ENCODE measurements at regions of chr6 and their contacts with region 1.

Region 1: GRCh38 chr6:57316581-57317059 is 810 bp upstream of the PRIM2 start:
- DNase-seq: peak; percentile 77
- H3K4me3 Mint-ChIP-seq: peak overlapping the region; percentile 99
- H3K27ac Mint-ChIP-seq: peak overlapping the region; percentile 94
- H3K4me1 Mint-ChIP-seq: peaks cover 36% of the 10 kb centered on the region
- H3K27me3 Mint-ChIP-seq: peaks cover 18% of the 10 kb centered on the region

Region 2: GRCh38 chr6:55980627-55981211 is 1335.9 kb before region 1 on chr6:
- intact Hi-C with region 1: no loop called
- DNase-seq: no peak
- H3K4me3 Mint-ChIP-seq: no peak overlapping the region
- H3K27ac Mint-ChIP-seq: no peak overlapping the region
- H3K4me1 Mint-ChIP-seq: no peaks in the 10 kb centered on the region
- H3K27me3 Mint-ChIP-seq: no peaks in the 10 kb centered on the region

Region 3: DNA sequence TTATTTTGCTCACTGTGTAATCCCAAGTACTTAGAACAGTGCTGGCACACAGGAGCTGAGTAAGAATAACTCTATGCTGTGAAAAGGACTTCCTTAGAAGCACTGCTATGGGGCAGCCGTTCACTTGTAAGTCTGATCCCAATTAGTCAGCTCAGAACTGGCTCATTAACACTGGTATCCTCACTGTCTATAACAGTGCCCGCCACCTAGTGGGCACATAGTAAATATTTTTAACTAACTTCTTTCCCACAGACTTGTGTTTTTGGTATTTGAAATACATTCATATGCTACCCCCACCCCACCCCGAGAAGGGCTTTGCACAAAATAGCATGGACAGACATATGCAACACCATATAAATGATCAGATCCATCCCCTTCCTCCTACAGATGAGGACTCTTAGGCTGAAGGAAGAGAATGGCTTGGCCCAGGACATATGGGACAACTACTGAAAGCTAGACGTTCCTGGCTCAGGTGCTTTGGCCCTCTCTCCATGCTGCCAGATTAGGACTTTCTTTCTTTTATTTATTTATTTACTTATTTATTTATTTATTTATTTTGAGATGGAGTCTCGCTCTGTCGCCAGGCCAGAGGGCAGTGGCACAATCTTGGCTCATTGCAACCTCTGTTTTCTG is 721.0 kb before region 1 on chr6:
- intact Hi-C with region 1: loop called (anchors 1 kb)
- DNase-seq: peak; percentile 17
- H3K4me3 Mint-ChIP-seq: no peak overlapping the region
- H3K27ac Mint-ChIP-seq: no peak overlapping the region
- H3K4me1 Mint-ChIP-seq: peaks cover 29% of the 10 kb centered on the region
- H3K27me3 Mint-ChIP-seq: peaks cover 1% of the 10 kb centered on the region

Region 4: GRCh38 chr6:56851541-56852259 is 464.9 kb before region 1 on chr6:
- intact Hi-C with region 1: loop called (anchors 2 kb)
- DNase-seq: peak; percentile 37
- H3K4me3 Mint-ChIP-seq: peak overlapping the region; percentile 81
- H3K27ac Mint-ChIP-seq: peak overlapping the region; percentile 78
- H3K4me1 Mint-ChIP-seq: peaks cover 30% of the 10 kb centered on the region
- H3K27me3 Mint-ChIP-seq: peaks cover 24% of the 10 kb centered on the region

Region 5: GRCh38 chr6:57021086-57021720 is 295.4 kb before region 1 on chr6:
- intact Hi-C with region 1: loop called (anchors 2 kb)
- DNase-seq: no peak
- H3K4me3 Mint-ChIP-seq: no peak overlapping the region
- H3K27ac Mint-ChIP-seq: no peak overlapping the region
- H3K4me1 Mint-ChIP-seq: no peaks in the 10 kb centered on the region
- H3K27me3 Mint-ChIP-seq: peaks cover 14% of the 10 kb centered on the region

Region 6: DNA sequence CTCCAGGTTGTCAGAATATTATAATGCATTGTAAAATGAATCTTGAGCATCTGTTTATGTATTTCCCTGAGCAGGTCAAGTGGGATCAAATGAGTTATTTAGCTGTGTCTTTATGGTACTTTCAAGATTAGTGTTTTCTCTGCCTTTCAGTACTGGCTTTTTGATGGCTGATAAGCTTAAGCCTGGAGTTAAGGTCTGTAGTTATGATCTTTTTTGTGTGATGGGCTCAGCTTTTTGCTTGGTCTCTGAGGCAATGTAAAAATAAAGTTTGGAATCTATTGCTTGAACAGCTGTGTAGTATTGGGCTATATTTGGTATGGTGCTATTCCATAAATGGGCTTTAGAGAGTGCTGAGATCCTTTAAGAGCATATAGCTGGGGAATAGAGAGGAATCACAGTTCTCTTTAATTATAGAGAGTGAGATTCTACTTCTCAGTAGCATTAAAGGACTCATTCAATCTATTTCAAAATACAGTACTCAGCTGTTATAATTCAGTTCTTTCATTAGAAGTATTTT is 185.9 kb before region 1 on chr6:
- intact Hi-C with region 1: no loop called
- DNase-seq: no peak
- H3K4me3 Mint-ChIP-seq: no peak overlapping the region
- H3K27ac Mint-ChIP-seq: no peak overlapping the region
- H3K4me1 Mint-ChIP-seq: peaks cover 11% of the 10 kb centered on the region
- H3K27me3 Mint-ChIP-seq: no peaks in the 10 kb centered on the region

Region 7: DNA sequence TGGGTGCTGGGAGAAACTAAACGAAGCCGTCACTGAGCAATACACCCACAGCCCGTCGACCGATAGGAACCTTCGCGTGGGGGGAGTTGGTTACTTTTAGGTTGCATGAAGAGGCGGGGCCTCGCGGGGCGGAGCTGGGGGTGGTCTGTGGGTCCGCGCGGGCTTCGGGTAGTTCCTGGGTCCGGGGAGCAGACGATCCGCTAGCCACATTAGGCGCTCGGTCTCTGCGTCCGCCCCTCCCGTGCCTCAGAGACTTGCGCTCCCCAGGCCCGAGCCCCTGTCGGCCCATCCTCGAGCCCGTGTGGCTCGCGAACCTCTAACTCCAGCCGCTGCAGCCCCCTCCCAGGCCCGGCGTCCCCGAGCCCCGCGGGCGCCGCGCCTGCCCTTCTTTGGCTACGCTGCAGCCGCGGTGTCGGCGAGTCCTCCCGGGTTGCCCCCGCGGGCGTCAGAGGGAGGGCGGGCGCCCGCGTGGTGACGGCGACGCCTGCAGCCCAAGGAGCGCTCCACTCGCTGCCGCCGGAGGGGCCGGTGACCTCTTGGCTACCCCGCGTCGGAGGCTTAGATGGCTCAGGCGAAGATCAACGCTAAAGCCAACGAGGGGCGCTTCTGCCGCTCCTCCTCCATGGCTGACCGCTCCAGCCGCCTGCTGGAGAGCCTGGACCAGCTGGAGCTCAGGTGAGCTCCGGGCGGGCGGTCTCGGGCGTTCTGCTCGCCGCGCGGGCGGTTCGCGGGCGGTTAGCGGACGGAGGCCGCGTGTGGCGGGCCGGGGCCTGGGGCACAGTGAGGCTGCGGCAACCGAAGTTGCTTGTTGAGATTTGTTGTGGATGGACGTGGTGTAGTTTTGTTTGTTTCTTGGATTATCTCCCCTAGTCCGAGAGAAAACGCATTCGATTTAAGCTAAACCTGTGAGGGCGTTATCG is 144.2 kb before region 1 on chr6 and contains the start of gene BAG2:
- intact Hi-C with region 1: loop called (anchors 1 kb)
- DNase-seq: peak; percentile 88
- H3K4me3 Mint-ChIP-seq: peak within 1 kb of the TSS; percentile 93
- H3K27ac Mint-ChIP-seq: peak within 1 kb of the TSS; percentile 95
- H3K4me1 Mint-ChIP-seq: peaks cover 45% of the 10 kb centered on the region
- H3K27me3 Mint-ChIP-seq: no peaks in the 10 kb centered on the region
- total RNA-seq, gene BAG2: 12.3 and 13.1 TPM in 2 replicates

Region 8: DNA sequence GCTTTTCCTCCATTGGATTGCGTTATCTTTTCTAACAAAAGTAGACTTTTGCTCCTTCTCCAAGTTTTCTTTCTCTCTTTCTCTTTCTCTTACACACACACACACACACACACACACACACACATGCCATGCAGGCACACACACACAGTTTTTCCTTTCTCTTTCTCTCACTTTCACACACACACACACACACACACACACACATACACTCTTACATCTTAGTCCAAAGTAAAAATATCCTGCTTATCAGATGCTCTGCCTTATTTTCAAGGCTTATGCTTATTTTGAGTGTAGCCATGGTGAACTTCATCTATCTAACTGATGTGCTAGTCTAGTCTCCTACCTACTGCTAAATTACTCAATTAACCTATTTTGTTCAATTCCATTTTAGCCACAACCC is 60.1 kb before region 1 on chr6:
- intact Hi-C with region 1: no loop called
- DNase-seq: no peak
- H3K4me3 Mint-ChIP-seq: no peak overlapping the region
- H3K27ac Mint-ChIP-seq: no peak overlapping the region
- H3K4me1 Mint-ChIP-seq: no peaks in the 10 kb centered on the region
- H3K27me3 Mint-ChIP-seq: no peaks in the 10 kb centered on the region

Region 9: GRCh38 chr6:57267586-57268293 is 48.9 kb before region 1 on chr6:
- intact Hi-C with region 1: loop called (anchors 1 kb)
- DNase-seq: no peak
- H3K4me3 Mint-ChIP-seq: no peak overlapping the region
- H3K27ac Mint-ChIP-seq: no peak overlapping the region
- H3K4me1 Mint-ChIP-seq: peaks cover 8% of the 10 kb centered on the region
- H3K27me3 Mint-ChIP-seq: peaks cover 2% of the 10 kb centered on the region

Measured in activated T-helper 1 cell treated with anti-CD3 and anti-CD28 coated beads, Interleukin-12 subunit alpha, Interleukin-12 subunit beta, Interleukin-2, Interleukin-4 antibody, amounts not matched to agents 30 ng/mL and 10 ng/mL and 1 ng/mL, durations not matched to agents 14 hours and 24 hours and 36 hours (primary cell).